CD8-positive, alpha-beta T cell (primary cell): ENCODE measurements at regions of chr13 and their contacts with region 1.

Region 1: GRCh38 chr13:52450012-52450792 is at the start of gene VPS36:
- DNase-seq: peak; percentile 88 to 98 (median 95)
- ATAC-seq: peak; percentile 58
- H3K4me3 ChIP-seq: peak within 1 kb of the TSS; percentile 90 to 95
- H3K4me3 Mint-ChIP-seq: peak within 1 kb of the TSS; percentile 89
- H3K27ac ChIP-seq: peak within 1 kb of the TSS; percentile 64 to 82
- H3K27ac Mint-ChIP-seq: peak within 1 kb of the TSS; percentile 93
- H3K4me1 ChIP-seq: peaks cover 34% of the 10 kb centered on the region
- H3K4me1 Mint-ChIP-seq: peaks cover 47% of the 10 kb centered on the region
- H3K27me3 ChIP-seq: no peaks in the 10 kb centered on the region
- H3K27me3 Mint-ChIP-seq: no peaks in the 10 kb centered on the region
- CTCF ChIP-seq: peak; percentile 99
- total RNA-seq, gene VPS36: 20.7 to 24.7 TPM

Region 2: DNA sequence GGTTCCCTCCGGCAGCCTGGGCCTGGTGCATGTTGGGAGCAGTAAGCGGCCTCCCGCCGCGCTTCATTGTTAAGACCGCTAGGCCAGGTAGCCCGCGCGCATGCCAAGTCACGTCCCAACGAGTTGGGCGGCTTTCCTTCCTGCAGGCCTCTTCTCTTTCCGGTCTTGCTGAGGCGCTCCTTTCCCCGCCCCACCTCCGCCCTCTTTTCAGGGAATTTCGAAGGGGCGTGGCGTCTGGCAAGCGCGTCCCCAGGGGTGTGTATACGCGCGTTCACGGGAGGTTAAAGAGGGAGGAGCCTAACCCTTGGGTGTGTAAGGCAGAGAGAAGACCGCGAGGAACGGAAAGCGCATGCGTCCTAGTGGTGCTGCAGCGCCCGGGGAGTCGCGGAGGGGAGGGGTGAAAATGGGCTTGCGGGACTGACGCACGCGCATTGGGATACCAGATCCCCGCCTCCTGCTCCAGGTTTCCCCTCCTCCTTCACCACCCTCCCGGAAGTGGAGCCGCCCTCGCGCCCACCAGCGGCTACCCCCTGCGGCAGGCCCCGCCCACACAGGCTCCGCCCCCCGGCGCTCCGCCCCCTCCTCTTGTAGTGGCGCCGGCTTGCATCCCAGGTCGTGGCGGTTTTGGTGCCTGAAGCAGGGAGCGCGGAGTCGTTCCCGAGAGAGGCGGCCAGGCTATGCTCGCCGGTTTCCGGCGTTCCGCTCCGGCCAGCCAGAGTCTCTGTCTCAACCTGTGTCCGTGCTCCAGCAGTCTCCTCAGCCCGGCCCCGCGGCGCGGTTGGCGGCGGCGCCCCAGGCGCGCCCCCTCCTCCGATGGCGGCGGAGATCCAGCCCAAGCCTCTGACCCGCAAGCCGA is 866.1 kb before region 1 on chr13 and contains the start of gene WDFY2:
- CTCF ChIA-PET with region 1: interaction called, 3 read pairs
- POLR2A ChIA-PET with region 1: no interaction called
- intact Hi-C with region 1: loop called (anchors 5 kb)
- DNase-seq: peak; percentile 98 to 100 (median 99)
- ATAC-seq: peak; percentile 82
- H3K4me3 ChIP-seq: peak within 1 kb of the TSS; percentile 71 to 81
- H3K4me3 Mint-ChIP-seq: peak within 1 kb of the TSS; percentile 99
- H3K27ac ChIP-seq: peak within 1 kb of the TSS; percentile 83 to 89
- H3K27ac Mint-ChIP-seq: peak within 1 kb of the TSS; percentile 100
- H3K4me1 ChIP-seq: peaks cover 11% of the 10 kb centered on the region
- H3K4me1 Mint-ChIP-seq: peaks cover 35% of the 10 kb centered on the region
- H3K27me3 ChIP-seq: no peaks in the 10 kb centered on the region
- H3K27me3 Mint-ChIP-seq: no peaks in the 10 kb centered on the region
- CTCF ChIP-seq: no peak
- total RNA-seq, gene WDFY2: 17.2 to 18.6 TPM

Region 3: DNA sequence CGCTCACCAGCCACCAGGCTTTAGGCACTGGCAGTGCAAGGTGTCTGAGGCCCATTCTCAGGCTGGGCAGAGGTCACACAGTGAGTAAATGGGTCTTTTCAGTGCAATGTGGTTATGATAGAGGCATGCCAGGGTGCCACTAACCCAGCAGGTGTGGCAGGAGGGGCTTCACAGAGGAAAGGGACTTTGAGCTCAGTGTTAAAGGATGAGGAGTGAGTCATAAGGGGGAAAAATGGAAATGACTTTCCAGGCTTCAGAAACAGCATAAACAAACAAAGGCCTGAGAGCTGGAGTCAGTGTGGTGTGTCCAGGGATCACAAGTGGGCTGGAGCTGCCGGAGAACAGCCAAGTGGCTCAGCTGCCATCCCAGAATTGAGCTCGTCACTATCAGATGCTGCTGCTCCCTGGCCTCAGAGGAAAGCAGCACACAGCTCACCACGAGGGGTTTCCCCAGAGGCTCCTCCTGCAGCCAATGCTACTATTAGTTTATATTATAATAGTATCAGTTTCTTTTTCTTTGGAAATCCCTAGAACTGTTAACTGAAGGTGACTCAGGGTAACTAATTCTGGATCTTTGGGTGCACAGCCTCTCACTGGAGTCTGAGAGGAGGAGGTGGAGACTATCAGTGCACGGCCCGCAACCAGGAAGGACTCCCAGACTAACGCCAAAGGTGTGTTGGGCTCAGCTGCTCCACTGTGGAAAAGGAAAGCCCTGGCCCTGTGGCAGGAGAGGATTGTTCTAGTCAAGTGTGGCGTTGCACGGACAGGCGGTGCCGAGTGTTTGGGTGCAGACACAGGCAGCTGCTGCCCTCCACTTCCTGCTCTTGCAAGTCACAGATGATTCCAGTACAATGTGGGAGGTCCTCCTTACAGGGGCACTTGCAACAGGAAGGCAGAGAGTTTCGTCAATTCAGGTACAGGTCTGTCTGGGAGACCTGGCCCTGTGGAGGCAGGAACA is 685.7 kb before region 1 on chr13:
- CTCF ChIA-PET with region 1: no interaction called
- POLR2A ChIA-PET with region 1: no interaction called
- intact Hi-C with region 1: no loop called
- DNase-seq: peak in 8 of 9 experiments; percentile 12 to 84 (median 48)
- ATAC-seq: peak; percentile 84
- H3K4me3 ChIP-seq: peak overlapping the region; percentile 19 to 51
- H3K4me3 Mint-ChIP-seq: peak overlapping the region; percentile 80
- H3K27ac ChIP-seq: peak overlapping the region; percentile 36 to 70
- H3K27ac Mint-ChIP-seq: peak overlapping the region; percentile 87
- H3K4me1 ChIP-seq: peaks cover 15% of the 10 kb centered on the region
- H3K4me1 Mint-ChIP-seq: peaks cover 26% of the 10 kb centered on the region
- H3K27me3 ChIP-seq: no peaks in the 10 kb centered on the region
- H3K27me3 Mint-ChIP-seq: no peaks in the 10 kb centered on the region
- CTCF ChIP-seq: no peak

Region 4: GRCh38 chr13:51844862-51845573 is 605.2 kb before region 1 on chr13 and contains the start of gene TMEM272:
- CTCF ChIA-PET with region 1: no interaction called
- POLR2A ChIA-PET with region 1: no interaction called
- intact Hi-C with region 1: loop called in 1 of 2 experiments (anchors 10 kb)
- DNase-seq: peak in 7 of 9 experiments; percentile 35 to 63 (median 54)
- ATAC-seq: peak; percentile 96
- H3K4me3 ChIP-seq: no peak within 1 kb of the TSS
- H3K4me3 Mint-ChIP-seq: peak within 1 kb of the TSS; percentile 53
- H3K27ac ChIP-seq: no peak within 1 kb of the TSS
- H3K27ac Mint-ChIP-seq: no peak within 1 kb of the TSS
- H3K4me1 ChIP-seq: peaks cover 5% of the 10 kb centered on the region
- H3K4me1 Mint-ChIP-seq: peaks cover 8% of the 10 kb centered on the region
- H3K27me3 ChIP-seq: no peaks in the 10 kb centered on the region
- H3K27me3 Mint-ChIP-seq: peaks cover 4% of the 10 kb centered on the region
- CTCF ChIP-seq: peak; percentile 83
- total RNA-seq, gene TMEM272: 1.1 to 1.7 TPM

Region 5: DNA sequence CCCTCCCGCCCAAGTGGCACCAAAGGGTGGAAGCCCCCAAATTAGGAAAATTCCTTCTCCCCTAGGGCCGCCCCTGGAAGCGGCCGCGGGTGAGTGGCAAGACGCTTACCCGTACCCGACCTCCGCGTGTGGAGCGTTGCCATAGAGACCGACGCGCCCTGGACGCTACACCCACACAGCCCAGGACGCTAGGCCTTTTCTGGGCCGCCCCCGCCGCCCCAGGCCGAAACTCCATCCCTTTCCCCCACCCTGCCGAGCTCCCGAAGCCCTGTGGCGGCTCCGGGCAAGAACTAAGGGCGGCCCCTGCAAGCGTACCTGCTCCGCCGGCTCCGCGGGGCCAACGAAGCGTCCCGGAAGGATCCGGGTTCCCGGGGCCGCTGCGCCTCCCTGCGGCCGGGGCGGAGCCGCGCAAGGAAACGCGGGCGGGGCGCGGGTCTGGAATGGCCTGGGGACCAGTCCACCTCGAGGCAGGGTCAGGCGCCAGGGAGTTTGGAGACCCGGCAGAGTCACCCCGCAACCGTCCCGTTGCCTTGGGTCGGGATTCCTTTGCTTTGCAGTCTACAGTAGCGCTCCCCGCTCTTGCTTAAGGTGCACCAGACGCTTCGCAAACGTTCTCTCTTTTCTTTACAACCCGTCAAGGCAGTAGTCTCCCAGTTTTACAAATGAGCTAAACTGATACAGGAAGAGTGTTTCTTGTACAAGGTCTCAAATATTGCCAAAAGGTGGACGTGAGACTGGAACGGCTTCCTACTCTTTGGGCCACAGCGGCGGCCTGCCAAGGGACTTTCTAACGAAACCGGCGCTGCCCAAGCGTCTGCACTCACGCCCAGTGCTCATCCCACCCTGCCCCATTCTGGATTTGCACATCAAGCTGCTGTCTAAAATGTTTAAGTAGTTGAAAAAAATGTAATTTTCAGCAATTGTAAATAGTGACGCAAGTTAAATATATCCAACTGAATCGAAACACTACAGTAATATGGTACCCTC is 321.2 kb before region 1 on chr13 and contains the start of gene NEK5:
- CTCF ChIA-PET with region 1: no interaction called
- POLR2A ChIA-PET with region 1: no interaction called
- intact Hi-C with region 1: loop called in 1 of 2 experiments (anchors 1 kb)
- DNase-seq: peak; percentile 6 to 69 (median 48)
- ATAC-seq: peak; percentile 83
- H3K4me3 ChIP-seq: peak within 1 kb of the TSS; percentile 62 to 66
- H3K4me3 Mint-ChIP-seq: peak within 1 kb of the TSS; percentile 83
- H3K27ac ChIP-seq: no peak within 1 kb of the TSS
- H3K27ac Mint-ChIP-seq: no peak within 1 kb of the TSS
- H3K4me1 ChIP-seq: peaks cover 16% of the 10 kb centered on the region
- H3K4me1 Mint-ChIP-seq: peaks cover 16% of the 10 kb centered on the region
- H3K27me3 ChIP-seq: peaks cover 5 to 11% of the 10 kb centered on the region in 2 experiments
- H3K27me3 Mint-ChIP-seq: peaks cover 16% of the 10 kb centered on the region
- CTCF ChIP-seq: peak; percentile 46
- total RNA-seq, gene NEK5: not detected

Region 6: GRCh38 chr13:52319876-52320275 is 130.3 kb before region 1 on chr13:
- CTCF ChIA-PET with region 1: no interaction called
- POLR2A ChIA-PET with region 1: no interaction called
- intact Hi-C with region 1: no loop called
- DNase-seq: no peak
- ATAC-seq: no peak
- H3K4me3 ChIP-seq: no peak overlapping the region
- H3K4me3 Mint-ChIP-seq: no peak overlapping the region
- H3K27ac ChIP-seq: no peak overlapping the region
- H3K27ac Mint-ChIP-seq: no peak overlapping the region
- H3K4me1 ChIP-seq: no peaks in the 10 kb centered on the region
- H3K4me1 Mint-ChIP-seq: peaks cover 2% of the 10 kb centered on the region
- H3K27me3 ChIP-seq: no peaks in the 10 kb centered on the region
- H3K27me3 Mint-ChIP-seq: peaks cover 17% of the 10 kb centered on the region
- CTCF ChIP-seq: no peak

Region 7: DNA sequence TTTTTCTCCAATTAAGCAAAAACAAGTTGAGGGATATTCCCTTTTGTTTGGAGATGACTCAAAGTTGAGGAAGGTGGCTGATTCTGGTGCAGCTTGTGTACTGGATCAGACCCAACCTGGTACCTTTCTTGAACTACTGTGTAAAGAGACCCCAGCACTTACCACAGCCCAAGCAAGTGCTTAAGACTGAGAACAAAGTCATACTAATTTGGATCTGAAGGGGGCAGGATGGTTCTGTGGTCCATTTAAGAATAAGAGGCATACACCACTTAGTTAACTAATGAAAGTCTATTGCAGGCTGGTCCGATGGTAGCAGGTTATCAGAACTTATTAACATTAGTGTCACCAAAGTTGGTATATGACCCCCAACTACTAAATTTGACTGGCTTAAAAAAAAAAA is 50.5 kb before region 1 on chr13:
- CTCF ChIA-PET with region 1: interaction called, 6 read pairs
- POLR2A ChIA-PET with region 1: no interaction called
- intact Hi-C with region 1: loop called in 1 of 2 experiments (anchors 5 kb)
- DNase-seq: peak in 2 of 9 experiments; percentile 11 to 24
- ATAC-seq: no peak
- H3K4me3 ChIP-seq: no peak overlapping the region
- H3K4me3 Mint-ChIP-seq: no peak overlapping the region
- H3K27ac ChIP-seq: no peak overlapping the region
- H3K27ac Mint-ChIP-seq: no peak overlapping the region
- H3K4me1 ChIP-seq: peaks cover 10% of the 10 kb centered on the region
- H3K4me1 Mint-ChIP-seq: peaks cover 10% of the 10 kb centered on the region
- H3K27me3 ChIP-seq: peaks cover 0 to 2% of the 10 kb centered on the region in 2 experiments
- H3K27me3 Mint-ChIP-seq: peaks cover 33% of the 10 kb centered on the region
- CTCF ChIP-seq: no peak

Region 8: DNA sequence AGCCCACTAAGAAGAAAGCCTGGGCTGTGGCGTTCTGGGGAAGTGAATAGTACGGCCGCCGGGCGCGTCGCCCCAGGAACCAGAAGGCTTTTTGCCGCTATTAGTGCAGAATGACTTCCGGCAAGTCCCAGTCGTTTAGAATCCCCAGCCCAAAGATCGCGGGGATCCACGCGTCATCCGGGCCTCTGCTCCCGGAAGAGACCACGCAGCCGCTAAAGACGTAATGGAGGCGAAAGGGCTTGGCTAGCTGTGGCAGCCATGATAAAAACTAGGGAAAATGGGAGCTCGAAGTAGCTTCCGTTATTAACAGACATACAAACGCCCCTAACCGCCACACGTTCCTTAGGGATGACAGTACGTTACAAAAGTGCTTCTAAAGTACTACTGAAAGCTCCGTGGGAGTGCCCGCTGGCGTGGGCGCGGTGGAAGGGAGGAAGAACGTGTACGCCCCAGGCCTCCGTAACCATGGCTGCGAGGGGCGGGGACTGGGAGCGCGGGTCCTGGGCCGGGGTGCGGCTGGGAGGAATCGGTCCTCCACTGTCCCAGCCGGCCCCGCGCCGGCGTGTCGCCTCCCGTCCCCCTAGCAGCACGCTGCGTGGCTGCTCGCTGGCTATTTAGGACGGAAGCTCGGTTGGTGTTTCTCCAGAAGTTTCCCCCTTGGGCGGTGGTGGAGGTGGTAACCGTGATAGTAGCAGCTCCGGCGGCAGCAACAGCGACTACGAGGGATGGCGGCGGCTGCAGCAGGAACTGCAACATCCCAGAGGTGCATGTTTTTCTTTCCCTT is 202.2 kb after region 1 on chr13 and contains the start of gene SUGT1:
- CTCF ChIA-PET with region 1: interaction called, 5 read pairs
- POLR2A ChIA-PET with region 1: interaction called, 7 read pairs
- intact Hi-C with region 1: loop called (anchors 1 kb)
- DNase-seq: peak; percentile 88 to 98 (median 95)
- ATAC-seq: peak; percentile 92
- H3K4me3 ChIP-seq: peak within 1 kb of the TSS; percentile 70 to 87
- H3K4me3 Mint-ChIP-seq: no peak within 1 kb of the TSS
- H3K27ac ChIP-seq: peak within 1 kb of the TSS; percentile 94 to 96
- H3K27ac Mint-ChIP-seq: no peak within 1 kb of the TSS
- H3K4me1 ChIP-seq: peaks cover 32% of the 10 kb centered on the region
- H3K4me1 Mint-ChIP-seq: peaks cover 7% of the 10 kb centered on the region
- H3K27me3 ChIP-seq: no peaks in the 10 kb centered on the region
- H3K27me3 Mint-ChIP-seq: no peaks in the 10 kb centered on the region
- CTCF ChIP-seq: peak; percentile 68
- total RNA-seq, gene SUGT1: 17.8 to 20.0 TPM